Posterior cingulate gyrus (tissue), 11 donors: ENCODE measurements at regions of chr22 and their contacts with region 1.

Region 1: GRCh38 chr22:18077639-18078328 is at the start of gene PEX26:
- DNase-seq: peak; percentile 90 to 99 (median 96)

Region 2: GRCh38 chr22:17742527-17742902 is 335.3 kb before region 1 on chr22:
- intact Hi-C with region 1: loop called (anchors 10 kb)
- DNase-seq: peak; percentile 59 to 97 (median 82)

Region 3: GRCh38 chr22:17830043-17830961 is 247.5 kb before region 1 on chr22:
- intact Hi-C with region 1: loop called (anchors 1 kb)
- DNase-seq: peak; percentile 78 to 98 (median 91)

Region 4: DNA sequence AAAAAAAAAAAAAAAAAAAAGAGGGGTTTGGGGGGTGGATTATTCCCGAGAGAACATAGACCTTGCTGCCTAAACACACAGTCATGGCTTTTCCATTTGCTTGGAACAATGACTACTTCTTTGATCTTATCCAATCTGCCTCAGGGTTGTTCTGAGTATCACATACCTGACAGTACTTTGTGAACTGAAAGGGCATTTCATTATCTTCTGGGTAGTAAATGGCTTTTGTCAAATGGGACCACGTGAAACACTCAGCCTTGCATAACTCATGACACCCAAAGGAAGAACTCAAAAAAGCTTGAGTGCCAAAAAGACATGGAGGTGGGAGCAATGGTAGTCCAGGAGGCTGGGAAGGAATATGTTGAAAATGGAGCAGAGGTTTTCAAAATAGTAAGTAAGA is 180.4 kb before region 1 on chr22:
- intact Hi-C with region 1: loop called (anchors 5 kb)
- DNase-seq: no peak

Region 5: GRCh38 chr22:17910561-17911311 is 167.0 kb before region 1 on chr22:
- intact Hi-C with region 1: loop called (anchors 2 kb)
- DNase-seq: peak; percentile 70 to 96 (median 75)

Region 6: GRCh38 chr22:18001040-18001893 is 76.5 kb before region 1 on chr22:
- intact Hi-C with region 1: loop called (anchors 2 kb)
- DNase-seq: peak; percentile 81 to 98 (median 85)

Region 7: GRCh38 chr22:18024276-18024947 is 53.4 kb before region 1 on chr22 and contains the start of gene MICAL3:
- intact Hi-C with region 1: loop called (anchors 2 kb)
- DNase-seq: peak; percentile 52 to 96 (median 72)

Region 8: GRCh38 chr22:18044548-18045271 is 33.1 kb before region 1 on chr22:
- intact Hi-C with region 1: no loop called
- DNase-seq: peak; percentile 76 to 98 (median 88)

Region 9: DNA sequence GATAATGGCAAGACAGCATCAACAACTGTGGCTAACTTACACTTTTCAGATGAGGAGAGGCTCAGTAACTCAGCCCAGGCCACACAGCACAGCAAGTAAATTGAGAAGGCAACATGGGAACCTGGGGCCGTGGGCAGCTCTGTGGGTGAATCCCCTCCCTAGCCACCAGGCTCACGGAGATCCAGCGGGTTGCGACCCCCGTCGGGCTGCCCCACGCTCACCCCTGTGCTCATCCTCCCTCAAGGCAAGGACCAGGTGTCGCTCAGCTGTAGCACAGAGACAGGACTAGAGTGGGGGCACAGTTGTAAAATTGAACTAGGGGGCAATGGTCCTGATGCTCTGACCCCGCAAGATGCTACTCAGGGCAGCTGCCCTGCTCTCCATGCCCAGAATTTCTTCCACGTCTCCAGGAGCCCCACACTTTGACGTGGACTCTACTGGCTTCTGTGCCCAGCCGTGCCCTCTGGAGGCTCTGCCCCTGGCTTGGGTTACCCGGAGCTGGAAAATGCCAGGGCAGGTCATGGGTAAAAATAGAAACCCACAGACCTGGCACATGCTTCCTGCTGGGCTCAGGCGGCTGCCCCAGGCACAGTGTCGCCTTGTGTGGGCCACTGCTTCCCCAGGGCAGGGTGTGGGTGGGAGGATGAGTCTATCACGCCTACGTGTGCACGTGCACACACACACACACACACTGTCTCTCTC is 41.8 kb after region 1 on chr22:
- intact Hi-C with region 1: no loop called
- DNase-seq: peak in 2 of 10 donors; percentile 37 to 62